ENCODE measurements at regions of chr11 and their contacts with region 1.

Region 1: DNA sequence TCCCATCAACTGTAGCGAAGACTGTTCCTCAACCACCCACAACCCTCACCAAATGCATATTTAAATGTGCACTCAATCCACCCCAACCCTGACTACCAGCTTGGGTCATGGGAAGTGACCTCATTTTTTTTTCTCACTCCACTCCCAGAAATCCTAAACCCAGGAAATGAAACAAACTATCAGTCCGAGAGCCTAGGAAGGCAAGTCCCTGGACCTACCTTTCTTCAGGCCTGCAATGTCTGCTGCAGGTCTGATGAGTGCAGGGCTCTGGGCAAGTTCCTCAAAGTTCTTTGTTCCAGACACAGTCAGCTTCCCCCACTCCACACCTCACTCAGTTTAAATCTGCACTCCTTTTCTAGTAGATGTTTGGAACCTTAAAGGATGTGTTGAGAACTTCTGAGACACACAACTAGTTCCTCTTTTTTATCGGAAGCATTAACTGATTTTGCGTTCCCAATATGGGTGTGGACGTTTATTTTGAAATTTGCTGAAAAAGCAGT is at the start of gene MS4A4E:
- ATAC-seq: no peak
- H3K4me3 ChIP-seq: no peak within 1 kb of the TSS
- H3K27ac ChIP-seq: no peak within 1 kb of the TSS
- H3K4me1 ChIP-seq: no peaks in the 10 kb centered on the region
- total RNA-seq, gene MS4A4E: 0.81 TPM in 1 of 8 experiments, not detected in the others

Region 2: DNA sequence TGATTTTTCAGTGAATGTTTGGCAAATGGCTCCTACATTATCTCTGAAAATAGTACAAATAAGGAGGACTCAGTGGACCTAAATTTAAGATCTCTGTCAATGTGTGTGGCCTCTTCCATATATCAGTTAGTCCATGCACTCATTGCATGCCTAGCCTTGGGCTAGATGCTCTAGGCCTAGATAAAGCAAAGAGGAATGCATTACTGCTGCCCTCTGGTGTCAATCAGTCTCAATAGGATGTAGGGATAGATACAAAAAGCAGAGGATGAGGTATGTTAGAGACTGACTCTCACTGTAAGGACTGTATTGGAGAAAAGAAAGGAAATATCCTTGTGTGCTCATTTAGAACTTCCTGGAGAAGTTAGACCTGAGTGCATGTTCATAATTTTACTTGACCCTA is 112.3 kb before region 1 on chr11:
- in situ Hi-C with region 1: loop called in 1 of 9 experiments (anchors 25 kb)
- ATAC-seq: peak; percentile 53 to 89 (median 70)
- H3K4me3 ChIP-seq: no peak overlapping the region
- H3K27ac ChIP-seq: no peak overlapping the region
- H3K4me1 ChIP-seq: no peaks in the 10 kb centered on the region

Region 3: GRCh38 chr11:61728940-61729219 is 1486.1 kb after region 1 on chr11:
- in situ Hi-C with region 1: no loop called
- ATAC-seq: peak in 1 of 8 experiments; percentile 5
- H3K4me3 ChIP-seq: no peak overlapping the region
- H3K27ac ChIP-seq: no peak overlapping the region
- H3K4me1 ChIP-seq: peaks cover 9 to 25% of the 10 kb centered on the region in 2 donors